ENCODE measurements at regions of chrX and their contacts with region 1.

Region 1: DNA sequence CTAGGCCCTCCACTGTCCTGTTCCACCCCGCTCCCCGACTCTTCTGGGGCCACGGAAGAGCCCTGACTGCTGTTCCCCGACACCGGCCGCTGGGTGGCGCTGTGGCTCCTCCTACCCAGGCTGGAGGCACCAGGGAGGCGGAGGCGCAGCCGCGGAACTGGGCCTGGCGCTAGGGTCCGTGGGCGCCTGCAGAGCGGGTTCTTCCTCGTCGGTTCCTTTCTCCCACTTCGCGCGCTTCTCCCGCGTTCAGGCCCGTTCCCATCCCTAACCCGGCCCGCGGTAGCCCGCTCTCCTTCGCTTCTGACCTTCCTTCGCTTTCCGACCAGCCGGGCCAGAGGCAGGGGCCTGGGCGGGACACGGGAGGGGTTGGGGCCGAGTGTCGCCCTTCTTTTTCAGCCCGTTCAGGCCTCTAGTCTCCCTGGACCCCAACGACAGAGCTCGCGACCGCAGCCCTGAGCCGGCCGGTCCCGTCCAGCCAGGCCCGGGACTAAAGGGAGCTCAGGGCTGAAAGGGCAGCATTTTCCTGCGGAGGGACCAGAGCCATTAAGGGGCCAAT is 34.3 kb downstream of the NALF2 start:
- DNase-seq: peak; percentile 93

Region 2: GRCh38 chrX:69556060-69557011 is 17.9 kb after region 1 on chrX:
- intact Hi-C with region 1: no loop called
- DNase-seq: no peak

Region 3: DNA sequence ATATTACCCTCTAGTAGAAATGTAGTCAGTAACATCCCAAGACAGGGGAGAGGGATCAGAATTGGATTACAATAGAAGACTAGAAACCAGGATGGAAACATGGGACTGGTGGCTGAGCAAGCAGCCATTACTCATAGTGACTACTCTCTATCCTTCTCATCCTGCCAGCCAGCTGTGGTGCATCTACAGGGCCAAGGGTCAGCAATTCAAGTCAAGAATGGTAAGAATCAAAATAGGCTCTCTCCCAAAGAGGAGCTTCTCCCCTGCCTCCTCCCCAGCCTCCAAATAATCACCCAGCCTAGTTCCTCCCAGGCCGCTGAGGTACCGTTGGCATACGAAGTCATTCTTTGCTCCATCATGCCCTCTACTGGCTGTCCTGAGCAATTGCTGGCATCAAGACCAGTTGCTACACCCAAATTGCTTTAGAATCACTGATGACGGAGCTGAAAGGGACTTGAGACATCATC is 491.9 kb after region 1 on chrX:
- intact Hi-C with region 1: loop called in 1 of 2 experiments (anchors 5 kb)
- DNase-seq: no peak

Region 4: GRCh38 chrX:70096052-70096451 is 557.7 kb after region 1 on chrX:
- intact Hi-C with region 1: loop called in 1 of 2 experiments (anchors 10 kb)
- DNase-seq: no peak